Activated B cell treated with CpG ODN at 0.5 μM for 24 hours (primary cell): ENCODE measurements at regions of chr18 and their contacts with region 1.

Region 1: DNA sequence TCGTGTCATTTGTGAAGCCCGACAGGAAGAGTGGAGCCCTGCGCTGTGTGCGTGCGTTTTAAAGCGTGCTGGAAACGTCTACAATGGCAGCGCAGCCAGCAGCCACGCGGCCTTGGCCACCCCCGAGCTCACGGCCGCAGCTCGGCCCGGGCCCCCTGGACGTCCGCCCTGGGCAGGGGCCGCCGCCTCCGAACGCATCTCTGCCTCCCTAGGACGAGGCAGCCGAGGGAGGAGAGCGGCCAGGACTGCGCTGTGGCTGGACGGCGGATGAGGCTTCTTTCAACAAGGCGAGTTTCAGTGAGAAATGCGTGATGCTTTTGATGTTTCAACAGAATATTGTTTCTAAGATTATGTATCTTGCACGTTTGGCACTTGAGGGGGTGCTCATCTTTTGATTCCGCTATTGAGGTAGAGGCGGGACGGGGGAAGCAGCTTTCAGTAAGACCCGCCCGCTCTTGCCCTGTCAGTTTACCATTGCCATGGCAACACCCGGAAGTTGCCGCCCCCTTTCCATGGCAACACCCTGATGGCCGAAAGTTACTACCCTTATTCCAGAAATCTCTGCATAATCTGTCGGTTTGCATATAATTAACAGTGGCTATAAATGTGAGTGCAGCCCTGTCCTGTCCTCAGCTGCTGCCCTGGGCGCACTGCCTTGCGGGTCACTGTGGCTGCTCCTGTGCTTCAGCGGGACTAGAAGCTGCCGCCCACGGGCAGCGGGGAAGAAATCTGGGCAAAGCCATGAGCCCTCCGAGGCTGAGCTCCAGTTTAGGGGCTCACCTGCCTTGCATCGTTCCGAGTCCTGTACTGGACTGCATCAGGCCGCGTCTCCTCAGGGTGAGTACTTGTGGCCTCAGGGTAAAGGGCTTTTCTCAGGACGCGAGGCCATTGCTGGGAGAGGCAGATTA is 38.6 kb downstream of the ADNP2 start:
- DNase-seq: peak; percentile 74
- ATAC-seq: peak; percentile 88
- H3K4me3 Mint-ChIP-seq: peak overlapping the region; percentile 90
- H3K27ac Mint-ChIP-seq: peak overlapping the region; percentile 69
- H3K4me1 Mint-ChIP-seq: peaks cover 20% of the 10 kb centered on the region
- H3K27me3 Mint-ChIP-seq: no peaks in the 10 kb centered on the region
- CTCF ChIP-seq: no peak

Region 2: GRCh38 chr18:80108728-80109675 is 38.7 kb before region 1 on chr18 and contains the start of gene ADNP2:
- CTCF ChIA-PET with region 1: no interaction called
- POLR2A ChIA-PET with region 1: interaction called, 4 read pairs
- intact Hi-C with region 1: loop called (anchors 1 kb)
- DNase-seq: peak; percentile 63
- ATAC-seq: peak; percentile 66
- H3K4me3 Mint-ChIP-seq: peak within 1 kb of the TSS; percentile 84
- H3K27ac Mint-ChIP-seq: peak within 1 kb of the TSS; percentile 80
- H3K4me1 Mint-ChIP-seq: peaks cover 45% of the 10 kb centered on the region
- H3K27me3 Mint-ChIP-seq: no peaks in the 10 kb centered on the region
- CTCF ChIP-seq: no peak
- total RNA-seq, gene ADNP2: 19.2 and 19.7 TPM in 2 replicates

Region 3: GRCh38 chr18:80136679-80137078 is 11.0 kb before region 1 on chr18:
- CTCF ChIA-PET with region 1: no interaction called
- POLR2A ChIA-PET with region 1: no interaction called
- intact Hi-C with region 1: loop called (anchors 1 kb)
- DNase-seq: no peak
- ATAC-seq: no peak
- H3K4me3 Mint-ChIP-seq: no peak overlapping the region
- H3K27ac Mint-ChIP-seq: no peak overlapping the region
- H3K4me1 Mint-ChIP-seq: no peaks in the 10 kb centered on the region
- H3K27me3 Mint-ChIP-seq: no peaks in the 10 kb centered on the region
- CTCF ChIP-seq: no peak